Dendritic cell treated with granulocyte-macrophage colony-stimulating factor and Interleukin-4, amounts not matched to agents 40 ng/mL and 50 ng/mL, for 4 days (primary cell): ENCODE measurements at regions of chr6 and their contacts with region 1.

Region 1: DNA sequence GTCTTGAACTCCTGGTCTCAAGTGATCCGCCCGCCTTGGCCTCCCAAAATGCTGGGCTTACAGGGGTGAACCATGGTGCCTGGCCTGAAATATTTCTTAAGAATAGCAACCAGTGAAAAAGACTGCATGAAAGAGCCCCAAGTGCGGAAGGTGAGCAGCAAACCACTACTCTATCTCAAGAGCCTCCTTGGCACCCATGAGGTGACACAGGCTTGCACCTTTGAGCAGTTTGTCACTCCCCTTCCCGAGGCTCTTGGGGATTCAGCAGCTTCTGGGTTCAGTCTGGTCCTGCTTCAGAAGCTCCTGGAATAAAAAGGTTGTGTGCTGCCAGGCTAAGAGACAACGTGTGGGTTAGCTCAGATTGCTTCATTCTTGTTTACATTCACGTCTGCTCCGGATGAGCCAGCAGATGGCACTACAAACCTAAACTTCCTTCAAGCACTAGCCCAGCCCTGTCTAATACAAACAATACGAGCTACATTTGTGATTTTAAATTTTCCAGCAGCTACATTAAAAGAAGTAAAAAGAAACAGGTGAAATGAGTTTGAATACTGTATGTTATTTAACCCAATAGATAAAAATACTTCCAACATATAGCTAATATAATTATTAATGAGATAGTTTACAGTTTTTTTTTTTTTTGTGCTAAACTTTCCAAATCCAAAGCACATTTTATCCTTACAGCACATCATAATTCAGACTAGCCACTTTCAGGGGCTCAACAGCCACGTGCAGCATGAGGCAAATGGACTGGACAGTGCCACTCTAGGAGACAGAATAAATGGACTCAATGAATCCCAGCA is 46.2 kb downstream of the GJA10 start:
- H3K4me3 Mint-ChIP-seq: no peak overlapping the region
- H3K27ac Mint-ChIP-seq: no peak overlapping the region
- H3K4me1 Mint-ChIP-seq: no peaks in the 10 kb centered on the region
- H3K27me3 Mint-ChIP-seq: no peaks in the 10 kb centered on the region

Region 2: DNA sequence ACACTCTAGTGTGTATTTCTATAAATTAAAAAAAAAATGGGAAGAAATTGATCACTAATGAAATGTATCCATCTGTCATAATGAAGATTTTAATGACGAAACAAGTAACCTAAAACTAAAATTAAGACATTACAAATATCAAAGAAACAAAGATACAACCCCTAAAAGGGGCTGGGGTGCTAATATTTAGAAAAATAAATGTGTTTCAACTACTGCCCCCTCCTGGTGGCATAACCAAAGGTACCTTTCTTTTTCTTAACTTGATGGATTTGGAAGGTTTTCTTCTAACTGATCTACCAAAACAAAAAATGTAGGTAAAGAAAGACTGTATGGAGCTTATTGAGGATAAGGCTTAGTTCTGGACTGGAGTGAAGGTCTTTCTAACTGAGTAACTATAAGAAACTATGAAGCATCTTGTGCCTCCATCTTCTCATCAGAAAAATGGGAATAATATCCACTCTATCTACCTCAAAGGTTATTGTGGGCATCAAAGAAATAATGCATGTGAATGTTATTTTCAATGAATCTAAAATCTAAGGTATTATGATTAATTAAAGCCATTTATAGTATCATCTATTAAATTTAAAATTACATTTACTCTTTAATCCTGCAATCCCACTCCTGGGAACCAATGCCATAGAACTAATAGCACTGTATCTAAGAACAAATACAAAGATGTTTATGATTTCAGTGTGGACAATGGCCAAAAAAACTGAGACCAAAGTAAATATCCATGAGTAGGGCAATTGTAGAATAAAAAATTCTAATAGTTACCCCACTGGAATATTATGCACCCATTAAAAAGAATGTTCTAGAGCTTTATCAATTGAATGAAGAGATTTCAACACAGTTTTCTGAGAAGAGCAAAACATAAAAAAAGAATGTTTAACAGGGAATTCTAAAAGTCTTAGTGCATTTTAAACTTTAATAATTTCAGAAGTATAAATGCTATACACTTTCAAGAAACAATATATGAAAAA is 239.1 kb after region 1 on chr6:
- intact Hi-C with region 1: loop called (anchors 5 kb)
- H3K4me3 Mint-ChIP-seq: no peak overlapping the region
- H3K27ac Mint-ChIP-seq: no peak overlapping the region
- H3K4me1 Mint-ChIP-seq: peaks cover 32% of the 10 kb centered on the region
- H3K27me3 Mint-ChIP-seq: peaks cover 11% of the 10 kb centered on the region

Region 3: DNA sequence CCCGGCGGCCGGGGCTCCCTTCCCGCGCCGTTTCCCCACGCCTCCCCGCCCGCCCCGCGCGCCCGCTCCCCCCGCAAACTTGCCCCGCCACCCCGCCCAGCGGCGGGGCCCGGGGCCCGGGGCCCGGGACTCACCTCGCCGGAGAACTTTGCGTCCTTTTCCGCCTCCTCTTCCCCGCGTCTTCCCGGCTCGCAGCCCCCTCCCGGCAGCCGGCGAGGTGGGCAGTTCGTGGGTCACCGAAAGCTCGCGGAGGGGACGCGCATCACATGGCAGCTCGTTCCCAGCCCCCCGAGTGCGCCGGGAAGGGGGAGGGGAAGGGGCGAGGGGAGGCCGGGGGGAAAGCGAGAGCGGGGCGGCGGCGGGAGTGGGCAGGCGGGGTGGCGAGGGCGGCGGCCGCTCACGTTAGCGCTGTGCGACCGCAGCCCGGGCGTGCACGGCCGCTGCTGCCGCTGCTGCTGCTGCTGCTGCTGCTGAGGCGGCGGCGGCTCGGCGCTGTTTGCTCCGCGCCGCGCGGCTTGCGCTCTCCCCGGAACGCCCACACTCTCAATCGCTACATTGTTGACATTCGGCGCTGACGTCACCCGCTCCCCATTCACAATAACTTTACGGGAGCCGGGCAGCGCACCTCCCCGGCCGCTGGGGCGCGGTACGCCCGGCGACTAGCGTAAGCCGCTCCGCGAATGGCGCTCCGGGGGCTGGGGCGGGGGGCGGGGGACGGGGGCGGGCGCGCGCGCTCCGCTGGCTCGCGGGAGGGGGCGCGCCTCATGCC is 356.1 kb after region 1 on chr6 and contains the start of gene BACH2:
- intact Hi-C with region 1: loop called (anchors 10 kb)
- H3K4me3 Mint-ChIP-seq: peak within 1 kb of the TSS; percentile 80
- H3K27ac Mint-ChIP-seq: no peak within 1 kb of the TSS
- H3K4me1 Mint-ChIP-seq: peaks cover 4% of the 10 kb centered on the region
- H3K27me3 Mint-ChIP-seq: peaks cover 75% of the 10 kb centered on the region

Region 4: DNA sequence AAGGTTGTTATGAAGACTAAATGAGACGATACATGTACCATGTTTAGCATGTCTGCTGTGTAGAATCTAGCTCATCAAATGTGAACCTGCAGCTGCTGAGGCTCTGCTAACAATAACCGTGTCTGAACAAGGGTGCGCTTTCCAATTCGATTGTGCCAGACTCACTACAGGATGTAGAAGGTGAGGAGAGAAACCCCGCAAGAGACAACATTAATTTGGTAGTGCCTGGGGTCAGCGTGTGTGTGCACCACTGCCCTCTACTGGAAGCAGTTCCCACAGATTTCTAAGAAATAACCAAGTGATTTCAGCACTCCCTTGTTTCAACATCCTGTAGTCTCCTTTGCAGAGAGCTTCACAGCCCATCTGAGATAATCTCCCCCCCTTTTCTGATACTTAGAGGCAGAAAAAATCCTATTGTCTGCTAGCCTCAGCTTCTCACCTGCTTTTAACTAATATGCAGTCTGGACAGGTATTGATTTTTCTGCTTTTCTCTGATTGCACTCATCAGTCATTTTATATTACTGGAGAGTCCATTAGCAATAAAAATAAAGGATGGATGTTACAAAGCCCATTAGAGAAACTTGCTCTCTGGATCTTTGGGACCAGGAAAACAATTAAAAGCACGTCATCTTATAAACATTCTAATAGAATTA is 452.9 kb after region 1 on chr6:
- intact Hi-C with region 1: loop called (anchors 1 kb)
- H3K4me3 Mint-ChIP-seq: no peak overlapping the region
- H3K27ac Mint-ChIP-seq: no peak overlapping the region
- H3K4me1 Mint-ChIP-seq: no peaks in the 10 kb centered on the region
- H3K27me3 Mint-ChIP-seq: no peaks in the 10 kb centered on the region

Region 5: GRCh38 chr6:90478789-90479602 is 538.6 kb after region 1 on chr6:
- intact Hi-C with region 1: loop called (anchors 1 kb)
- H3K4me3 Mint-ChIP-seq: no peak overlapping the region
- H3K27ac Mint-ChIP-seq: peak overlapping the region; percentile 44
- H3K4me1 Mint-ChIP-seq: peaks cover 8% of the 10 kb centered on the region
- H3K27me3 Mint-ChIP-seq: no peaks in the 10 kb centered on the region